H1 (cell line): ENCODE measurements at regions of chr11 and their contacts with region 1.

Region 1: DNA sequence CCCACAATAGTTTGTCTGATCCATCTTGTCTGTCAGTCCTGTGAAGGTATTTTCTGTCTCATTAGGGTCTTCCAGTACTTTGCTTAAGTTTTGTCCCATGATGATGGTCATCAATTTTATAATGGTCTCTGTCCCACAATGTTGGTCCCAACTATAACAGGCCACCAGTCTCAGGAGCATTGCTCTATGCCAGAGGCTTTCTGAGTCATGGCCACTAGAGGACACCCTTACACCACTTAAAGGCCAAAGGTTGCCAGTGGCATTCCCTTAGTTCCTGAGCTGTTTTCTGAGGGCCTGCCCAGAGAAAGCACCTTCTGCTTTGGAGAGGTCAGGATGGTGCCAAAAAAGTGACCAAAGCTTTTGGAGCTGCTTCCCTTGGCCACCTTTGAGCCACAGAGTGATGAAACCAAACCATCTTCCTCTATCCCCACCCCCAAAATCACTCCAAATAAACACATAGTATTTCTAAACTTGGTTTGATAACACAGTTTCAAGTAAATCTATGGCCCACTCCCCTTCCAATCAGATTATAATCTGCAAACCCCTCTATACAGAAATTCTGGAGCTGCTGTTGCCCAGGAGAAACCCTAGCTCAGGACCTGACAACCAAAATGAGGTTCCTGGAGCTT is 19.3 kb downstream of the EIF3F start:
- DNase-seq: peak in 1 of 2 experiments; percentile 77
- H3K4me3 ChIP-seq: no peak overlapping the region
- H3K27ac ChIP-seq: no peak overlapping the region
- H3K4me1 ChIP-seq: no peaks in the 10 kb centered on the region
- H3K27me3 ChIP-seq: peaks cover 0 to under 1% (median 0%) of the 10 kb centered on the region in 4 experiments; a peak in 1 of 7 replicates
- CTCF ChIP-seq: peak; percentile 54 to 97 (median 93)
- EP300 ChIP-seq: no peak
- POLR2A ChIP-seq: no peak
- RAD21 ChIP-seq: peak; percentile 99 to 100

Region 2: GRCh38 chr11:7986768-7987559 is 19.5 kb before region 1 on chr11 and contains the start of gene EIF3F:
- CTCF ChIA-PET with region 1: interaction called, 11 read pairs
- POLR2A ChIA-PET with region 1: interaction called, 11 read pairs
- DNase-seq: peak; percentile 88 to 97
- H3K4me3 ChIP-seq: peak within 1 kb of the TSS; percentile 73 to 99 (median 86)
- H3K27ac ChIP-seq: peak within 1 kb of the TSS; percentile 41; the same call in 1 of the 2 replicates
- H3K4me1 ChIP-seq: peaks cover 0 to 5% (median 3%) of the 10 kb centered on the region in 4 experiments; a peak in 4 of 7 replicates
- H3K27me3 ChIP-seq: no peaks in the 10 kb centered on the region
- CTCF ChIP-seq: peak; percentile 60 to 83 (median 81)
- EP300 ChIP-seq: peak in 1 of 2 experiments; percentile 70; a peak in 1 of 3 replicates
- POLR2A ChIP-seq: peak; percentile 57 to 62
- RAD21 ChIP-seq: peak; percentile 88 to 89
- total RNA-seq, gene EIF3F: 385 and 388 TPM in 2 replicates

Region 3: GRCh38 chr11:8018484-8019313 is 12.2 kb after region 1 on chr11:
- CTCF ChIA-PET with region 1: interaction called, 142 read pairs
- POLR2A ChIA-PET with region 1: interaction called, 4 read pairs
- DNase-seq: peak in 1 of 2 experiments; percentile 87
- H3K4me3 ChIP-seq: peak overlapping the region; percentile 56 to 68 (median 61)
- H3K27ac ChIP-seq: no peak overlapping the region
- H3K4me1 ChIP-seq: peaks cover 6 to 17% (median 13%) of the 10 kb centered on the region in 4 experiments; a peak in 6 of 7 replicates
- H3K27me3 ChIP-seq: peaks cover 14 to 59% (median 52%) of the 10 kb centered on the region in 4 experiments
- CTCF ChIP-seq: no peak
- EP300 ChIP-seq: peak in 1 of 2 experiments; percentile 67; a peak in 1 of 3 replicates
- POLR2A ChIP-seq: no peak; a peak in 1 of 3 replicates
- RAD21 ChIP-seq: no peak

Region 4: GRCh38 chr11:8056810-8057463 is 50.5 kb after region 1 on chr11:
- CTCF ChIA-PET with region 1: interaction called, 63 read pairs
- POLR2A ChIA-PET with region 1: no interaction called
- DNase-seq: peak in 1 of 2 experiments; percentile 36
- H3K4me3 ChIP-seq: no peak overlapping the region
- H3K27ac ChIP-seq: no peak overlapping the region
- H3K4me1 ChIP-seq: peaks cover 0 to 5% (median 0%) of the 10 kb centered on the region in 4 experiments; a peak in 2 of 7 replicates
- H3K27me3 ChIP-seq: no peaks in the 10 kb centered on the region
- CTCF ChIP-seq: no peak
- EP300 ChIP-seq: no peak
- POLR2A ChIP-seq: no peak
- RAD21 ChIP-seq: no peak

Region 5: DNA sequence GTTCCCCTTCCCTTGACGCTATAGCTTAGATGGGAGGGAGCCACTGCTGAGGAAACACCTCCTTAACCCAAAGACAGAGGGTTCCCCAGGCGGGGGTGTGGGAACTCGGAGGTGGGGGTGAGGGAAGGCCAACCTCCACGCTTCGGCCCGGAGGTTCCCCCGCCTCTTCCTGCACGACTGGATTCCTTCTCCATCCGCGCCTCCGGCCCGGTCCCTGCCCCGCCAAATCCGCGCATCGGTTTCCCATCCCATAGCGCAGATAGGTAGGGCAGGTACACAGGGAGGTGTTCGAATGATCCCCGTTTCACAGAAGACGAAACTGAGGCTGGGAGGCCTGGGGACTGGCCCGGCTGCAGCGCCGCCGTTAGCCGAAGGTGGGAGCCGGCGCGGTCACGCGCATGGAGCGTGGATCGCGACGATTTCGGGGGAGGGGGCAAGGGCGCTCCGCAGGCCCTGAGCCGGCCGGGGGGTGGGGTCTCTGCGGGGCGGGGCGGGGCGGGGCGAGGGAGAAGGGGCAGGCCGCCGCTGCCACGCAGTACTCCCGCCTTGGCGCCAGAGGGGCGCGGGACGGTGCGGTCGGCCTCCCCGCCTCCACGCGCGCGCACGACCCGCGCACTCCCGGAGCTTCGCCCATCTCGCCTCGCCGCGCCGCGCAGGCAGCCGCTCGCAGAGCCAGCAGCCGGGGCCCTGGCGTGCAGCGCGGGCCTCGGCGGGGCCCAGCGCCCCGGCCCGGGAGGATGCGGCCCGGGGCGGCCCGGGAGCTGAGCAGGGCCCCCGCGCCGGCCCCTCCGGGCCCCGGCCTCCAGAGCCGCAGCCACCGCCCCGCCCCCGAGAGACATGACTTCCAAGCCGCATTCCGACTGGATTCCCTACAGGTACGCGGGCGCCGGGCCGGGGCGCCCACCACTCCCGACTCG is 74.5 kb after region 1 on chr11 and contains the start of gene TUB:
- CTCF ChIA-PET with region 1: interaction called, 769 read pairs
- POLR2A ChIA-PET with region 1: interaction called, 3 read pairs
- DNase-seq: peak in 1 of 2 experiments; percentile 77
- H3K4me3 ChIP-seq: peak within 1 kb of the TSS; percentile 41 to 73 (median 51)
- H3K27ac ChIP-seq: no peak within 1 kb of the TSS
- H3K4me1 ChIP-seq: peaks cover 10 to 46% (median 31%) of the 10 kb centered on the region in 4 experiments
- H3K27me3 ChIP-seq: peaks cover 0 to 18% (median 13%) of the 10 kb centered on the region in 4 experiments; a peak in 5 of 7 replicates
- CTCF ChIP-seq: no peak
- EP300 ChIP-seq: no peak
- POLR2A ChIP-seq: no peak
- RAD21 ChIP-seq: no peak
- total RNA-seq, gene TUB: 29.9 and 31.3 TPM in 2 replicates

Region 6: GRCh38 chr11:8099291-8099899 is 92.9 kb after region 1 on chr11:
- CTCF ChIA-PET with region 1: interaction called, 769 read pairs
- POLR2A ChIA-PET with region 1: interaction called, 10 read pairs
- DNase-seq: peak in 1 of 2 experiments; percentile 87
- H3K4me3 ChIP-seq: no peak overlapping the region
- H3K27ac ChIP-seq: no peak overlapping the region
- H3K4me1 ChIP-seq: no peaks in the 10 kb centered on the region
- H3K27me3 ChIP-seq: no peaks in the 10 kb centered on the region; a peak in 1 of 7 replicates
- CTCF ChIP-seq: peak; percentile 54 to 75 (median 73)
- EP300 ChIP-seq: no peak
- POLR2A ChIP-seq: no peak
- RAD21 ChIP-seq: peak; percentile 83 to 88

Region 7: DNA sequence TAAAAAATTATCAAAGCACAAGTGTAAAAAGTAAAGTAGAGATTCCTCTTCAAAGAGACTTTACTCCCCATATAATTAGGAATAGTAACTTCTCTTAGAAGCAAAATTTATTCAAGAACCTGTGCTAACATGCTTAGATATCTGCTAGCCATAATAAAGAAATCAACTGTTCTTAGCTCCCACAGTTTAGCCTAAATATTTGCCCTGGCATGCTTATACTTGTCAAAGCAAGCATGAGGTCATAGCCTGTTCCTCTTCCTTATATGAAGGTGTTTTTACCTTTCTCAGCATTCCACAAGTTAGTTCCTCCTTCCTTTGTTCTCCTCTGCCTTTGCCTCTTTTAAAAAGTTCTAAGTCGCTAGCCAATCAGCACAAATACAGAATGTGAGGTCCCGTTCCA is 132.1 kb after region 1 on chr11:
- CTCF ChIA-PET with region 1: no interaction called
- POLR2A ChIA-PET with region 1: no interaction called
- DNase-seq: no peak
- H3K4me3 ChIP-seq: no peak overlapping the region
- H3K27ac ChIP-seq: no peak overlapping the region
- H3K4me1 ChIP-seq: peaks cover 0 to 6% (median 0%) of the 10 kb centered on the region in 4 experiments; a peak in 1 of 7 replicates
- H3K27me3 ChIP-seq: no peaks in the 10 kb centered on the region
- CTCF ChIP-seq: no peak
- EP300 ChIP-seq: no peak
- POLR2A ChIP-seq: no peak
- RAD21 ChIP-seq: no peak